ENCODE measurements at regions of chr2 and their contacts with region 1.

Region 1: DNA sequence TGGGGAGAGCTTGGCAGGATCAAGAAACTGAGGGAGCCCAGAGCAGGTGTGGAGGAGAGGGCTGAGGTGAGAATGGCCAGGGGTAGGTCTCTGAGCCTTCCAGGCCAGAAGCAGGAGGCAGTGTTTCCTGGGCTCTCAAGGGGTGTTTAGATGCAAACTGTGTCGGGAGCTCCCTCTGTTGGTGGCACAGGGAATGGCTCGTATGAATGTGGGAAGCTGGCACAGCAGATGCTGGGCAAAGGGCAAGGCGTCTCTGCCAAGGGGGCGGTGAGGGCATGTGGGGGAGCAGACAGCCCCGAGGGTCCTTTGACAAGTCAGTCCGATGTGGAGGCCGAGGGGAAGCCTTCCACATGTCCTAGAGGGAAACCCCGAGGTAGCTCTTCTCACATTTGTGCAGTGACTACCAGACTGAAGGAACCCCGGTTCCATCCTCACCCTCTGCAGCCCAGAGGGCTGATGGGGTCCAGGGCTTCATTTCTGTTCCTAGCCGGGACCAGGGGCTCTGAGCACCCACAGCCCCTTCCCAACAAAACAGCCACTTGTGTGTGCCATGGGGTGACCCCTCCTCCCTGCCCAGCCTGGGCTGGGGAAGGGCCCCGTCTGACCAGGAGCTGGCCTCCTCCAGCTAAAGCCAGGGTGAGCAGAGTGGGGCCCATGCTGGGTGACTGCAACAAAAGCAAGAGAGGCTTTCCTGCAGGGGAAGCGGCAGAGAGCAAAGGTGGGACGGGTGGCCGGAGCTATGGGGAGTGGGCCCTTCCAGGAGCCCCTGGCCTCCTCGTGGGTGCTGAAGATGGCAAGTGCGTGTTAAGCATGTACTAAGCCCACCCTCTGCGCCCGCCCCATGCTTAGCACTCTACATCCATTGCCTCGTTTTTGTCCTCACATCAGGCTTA is 103.4 kb downstream of the SEPTIN10 start:
- DNase-seq: peak; percentile 79 to 80
- H3K4me3 ChIP-seq: no peak overlapping the region
- H3K4me3 Mint-ChIP-seq: no peak overlapping the region
- H3K27ac Mint-ChIP-seq: no peak overlapping the region
- H3K4me1 ChIP-seq: no peaks in the 10 kb centered on the region
- H3K4me1 Mint-ChIP-seq: no peaks in the 10 kb centered on the region
- H3K27me3 ChIP-seq: no peaks in the 10 kb centered on the region
- H3K27me3 Mint-ChIP-seq: no peaks in the 10 kb centered on the region
- CTCF ChIP-seq: peak; percentile 89 to 98

Region 2: GRCh38 chr2:108998911-108999310 is 511.5 kb before region 1 on chr2:
- CTCF ChIA-PET with region 1: no interaction called
- POLR2A ChIA-PET with region 1: no interaction called
- intact Hi-C with region 1: no loop called
- DNase-seq: no peak
- H3K4me3 ChIP-seq: no peak overlapping the region
- H3K4me3 Mint-ChIP-seq: no peak overlapping the region
- H3K27ac Mint-ChIP-seq: no peak overlapping the region
- H3K4me1 ChIP-seq: peaks cover 5% of the 10 kb centered on the region; the same call in 1 of the 2 replicates
- H3K4me1 Mint-ChIP-seq: peaks cover 4% of the 10 kb centered on the region
- H3K27me3 ChIP-seq: no peaks in the 10 kb centered on the region
- H3K27me3 Mint-ChIP-seq: no peaks in the 10 kb centered on the region
- CTCF ChIP-seq: no peak

Region 3: DNA sequence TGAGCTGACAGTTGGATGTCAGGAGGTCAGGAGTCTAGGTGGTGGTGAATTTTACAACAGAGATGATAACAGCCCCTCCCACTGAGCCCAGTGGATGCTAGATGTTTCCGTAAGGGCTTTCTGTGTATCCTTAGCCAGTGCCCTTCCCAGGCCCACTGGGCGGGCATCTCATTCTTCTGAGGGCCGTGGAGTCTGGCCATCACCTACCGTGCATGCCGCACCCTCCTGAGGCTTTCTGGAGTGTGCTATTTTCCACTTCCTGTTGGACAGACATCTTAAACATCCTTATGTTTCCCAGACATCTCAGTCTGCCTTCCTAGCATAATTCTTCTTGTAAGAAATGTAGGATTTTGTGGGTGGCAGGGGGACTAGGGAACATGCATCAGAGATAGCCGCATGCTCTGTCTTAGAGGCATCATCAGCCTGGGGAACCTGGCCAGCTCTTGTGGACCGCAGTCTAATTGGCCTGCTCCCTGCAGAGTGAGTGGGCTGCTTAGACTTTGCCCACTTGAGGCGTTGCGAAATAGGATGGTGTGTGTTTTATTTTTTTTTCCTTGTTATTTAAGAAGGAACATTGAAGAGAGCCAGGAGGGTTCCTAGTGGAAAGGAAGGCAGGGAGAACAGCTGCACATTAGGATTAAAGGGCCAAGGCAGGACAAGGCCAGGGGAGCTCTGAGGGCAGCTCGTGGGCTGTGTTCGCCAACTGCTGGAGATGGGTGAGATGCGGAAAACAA is 245.6 kb before region 1 on chr2:
- CTCF ChIA-PET with region 1: no interaction called
- POLR2A ChIA-PET with region 1: no interaction called
- intact Hi-C with region 1: no loop called
- DNase-seq: peak; percentile 29 to 53
- H3K4me3 ChIP-seq: no peak overlapping the region
- H3K4me3 Mint-ChIP-seq: no peak overlapping the region
- H3K27ac Mint-ChIP-seq: no peak overlapping the region
- H3K4me1 ChIP-seq: no peaks in the 10 kb centered on the region
- H3K4me1 Mint-ChIP-seq: peaks cover 7% of the 10 kb centered on the region
- H3K27me3 ChIP-seq: no peaks in the 10 kb centered on the region
- H3K27me3 Mint-ChIP-seq: no peaks in the 10 kb centered on the region
- CTCF ChIP-seq: no peak

Region 4: GRCh38 chr2:109376115-109376514 is 134.3 kb before region 1 on chr2:
- CTCF ChIA-PET with region 1: no interaction called
- POLR2A ChIA-PET with region 1: no interaction called
- intact Hi-C with region 1: no loop called
- DNase-seq: no peak
- H3K4me3 ChIP-seq: no peak overlapping the region
- H3K4me3 Mint-ChIP-seq: no peak overlapping the region
- H3K27ac Mint-ChIP-seq: no peak overlapping the region
- H3K4me1 ChIP-seq: no peaks in the 10 kb centered on the region
- H3K4me1 Mint-ChIP-seq: peaks cover 7% of the 10 kb centered on the region
- H3K27me3 ChIP-seq: no peaks in the 10 kb centered on the region
- H3K27me3 Mint-ChIP-seq: peaks cover 9% of the 10 kb centered on the region
- CTCF ChIP-seq: no peak

Region 5: GRCh38 chr2:109419960-109420370 is 90.4 kb before region 1 on chr2:
- CTCF ChIA-PET with region 1: interaction called, 6 read pairs
- POLR2A ChIA-PET with region 1: no interaction called
- intact Hi-C with region 1: loop called (anchors 5 kb)
- DNase-seq: no peak
- H3K4me3 ChIP-seq: no peak overlapping the region
- H3K4me3 Mint-ChIP-seq: no peak overlapping the region
- H3K27ac Mint-ChIP-seq: no peak overlapping the region
- H3K4me1 ChIP-seq: peaks cover 13% of the 10 kb centered on the region
- H3K4me1 Mint-ChIP-seq: peaks cover 12% of the 10 kb centered on the region
- H3K27me3 ChIP-seq: no peaks in the 10 kb centered on the region
- H3K27me3 Mint-ChIP-seq: no peaks in the 10 kb centered on the region
- CTCF ChIP-seq: no peak

Region 6: DNA sequence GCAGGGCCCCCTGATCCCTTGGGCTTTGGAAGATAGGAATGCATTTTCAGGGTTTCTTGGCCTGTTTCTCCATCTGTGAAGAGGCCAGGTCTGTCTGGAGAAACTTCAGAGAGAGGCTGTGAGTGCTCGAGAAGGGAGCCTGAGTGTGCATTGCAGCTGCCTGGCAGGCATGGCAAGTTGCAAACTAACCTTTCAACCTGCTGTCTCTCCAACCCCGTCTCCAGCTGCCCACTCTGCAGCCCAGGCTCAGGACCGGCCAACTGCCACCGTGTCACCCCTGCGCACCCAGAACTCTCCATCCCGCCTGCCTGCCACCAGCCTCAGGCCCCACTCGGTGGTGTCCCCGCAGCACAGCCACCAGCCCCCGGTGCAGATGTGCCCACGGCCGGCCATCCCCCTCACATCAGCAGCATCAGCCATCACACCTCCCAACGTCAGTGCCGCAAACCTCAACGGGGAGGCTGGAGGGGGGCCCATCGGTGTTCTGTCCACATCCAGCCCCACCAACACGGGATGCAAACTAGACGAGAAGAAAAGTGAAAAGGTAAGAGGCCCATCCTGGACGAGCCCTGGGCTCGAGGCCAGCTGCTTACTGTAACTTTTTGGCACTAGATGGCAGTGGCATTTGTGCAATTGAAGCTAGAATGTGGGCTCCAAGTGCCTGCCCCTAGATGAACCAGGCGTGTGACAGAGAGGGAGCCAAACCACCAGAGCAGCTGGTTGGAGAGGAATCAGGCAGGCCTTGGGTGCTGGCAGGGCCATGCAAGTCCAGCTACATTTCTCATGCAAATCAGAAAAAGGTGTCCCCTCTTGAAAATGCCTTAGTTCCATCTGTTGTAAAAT is 61.2 kb before region 1 on chr2:
- CTCF ChIA-PET with region 1: interaction called, 10 read pairs
- POLR2A ChIA-PET with region 1: no interaction called
- intact Hi-C with region 1: no loop called
- DNase-seq: peak in 1 of 2 experiments; percentile 29
- H3K4me3 ChIP-seq: no peak overlapping the region
- H3K4me3 Mint-ChIP-seq: no peak overlapping the region
- H3K27ac Mint-ChIP-seq: no peak overlapping the region
- H3K4me1 ChIP-seq: no peaks in the 10 kb centered on the region
- H3K4me1 Mint-ChIP-seq: no peaks in the 10 kb centered on the region
- H3K27me3 ChIP-seq: no peaks in the 10 kb centered on the region
- H3K27me3 Mint-ChIP-seq: peaks cover 7% of the 10 kb centered on the region
- CTCF ChIP-seq: peak in 1 of 2 experiments; percentile 4

Measured in Caco-2 (cell line).